Uterus (tissue), 4 donors: ENCODE measurements at regions of chr12 and their contacts with region 1.

Region 1: GRCh38 chr12:131311764-131312163 is 358.1 kb downstream of the ADGRD1 start:
- DNase-seq: no peak
- H3K4me3 ChIP-seq: no peak overlapping the region
- H3K27ac ChIP-seq: no peak overlapping the region
- H3K4me1 ChIP-seq: no peaks in the 10 kb centered on the region
- H3K27me3 ChIP-seq: no peaks in the 10 kb centered on the region
- CTCF ChIP-seq: no peak
- POLR2A ChIP-seq: no peak

Region 2: DNA sequence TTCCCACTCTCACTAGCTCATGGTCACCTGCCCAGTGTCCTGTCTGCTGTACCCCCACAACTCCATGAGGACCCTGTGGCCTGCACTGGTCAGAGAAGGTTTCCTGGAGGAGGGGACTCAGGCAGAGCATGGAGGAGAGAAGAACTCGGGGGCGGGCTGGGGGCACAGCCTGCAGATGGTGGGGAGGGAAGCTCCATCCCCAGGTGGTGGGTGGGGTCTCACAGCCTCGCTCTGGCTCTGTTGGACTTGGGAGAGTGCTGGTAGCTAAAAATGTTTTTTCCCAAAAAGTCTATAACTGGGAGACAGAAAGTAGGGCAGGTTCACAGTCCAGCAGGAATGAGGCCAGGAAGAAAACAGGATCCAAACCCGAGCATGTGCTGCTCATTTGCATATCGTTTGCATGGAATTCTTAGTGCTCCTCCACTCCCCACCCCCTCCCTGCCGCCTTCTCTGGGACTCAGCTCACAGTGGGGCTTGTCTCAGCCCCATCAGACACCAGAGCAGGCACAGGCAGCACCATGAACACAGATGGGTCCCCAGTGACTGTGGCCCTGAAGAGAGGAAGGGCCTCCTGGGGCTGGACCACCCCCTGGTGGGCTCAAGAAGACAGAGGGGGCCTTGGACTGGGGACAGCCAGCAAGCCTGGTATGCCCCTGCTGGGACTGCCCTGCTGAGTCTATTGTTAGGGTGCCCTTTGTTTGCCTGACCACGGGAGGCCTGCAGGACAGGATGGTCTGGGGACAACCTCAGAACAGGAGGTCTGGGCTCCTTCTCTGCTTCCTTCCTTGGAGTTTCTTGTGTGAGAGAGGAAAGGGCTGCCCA is 332.1 kb after region 1 on chr12:
- intact Hi-C with region 1: loop called (anchors 2 kb)
- DNase-seq: no peak
- H3K4me3 ChIP-seq: no peak overlapping the region
- H3K27ac ChIP-seq: no peak overlapping the region
- H3K4me1 ChIP-seq: no peaks in the 10 kb centered on the region
- H3K27me3 ChIP-seq: no peaks in the 10 kb centered on the region
- CTCF ChIP-seq: no peak
- POLR2A ChIP-seq: no peak